HEK293T (cell line): ENCODE measurements at regions of chr11 and their contacts with region 1.

Region 1: DNA sequence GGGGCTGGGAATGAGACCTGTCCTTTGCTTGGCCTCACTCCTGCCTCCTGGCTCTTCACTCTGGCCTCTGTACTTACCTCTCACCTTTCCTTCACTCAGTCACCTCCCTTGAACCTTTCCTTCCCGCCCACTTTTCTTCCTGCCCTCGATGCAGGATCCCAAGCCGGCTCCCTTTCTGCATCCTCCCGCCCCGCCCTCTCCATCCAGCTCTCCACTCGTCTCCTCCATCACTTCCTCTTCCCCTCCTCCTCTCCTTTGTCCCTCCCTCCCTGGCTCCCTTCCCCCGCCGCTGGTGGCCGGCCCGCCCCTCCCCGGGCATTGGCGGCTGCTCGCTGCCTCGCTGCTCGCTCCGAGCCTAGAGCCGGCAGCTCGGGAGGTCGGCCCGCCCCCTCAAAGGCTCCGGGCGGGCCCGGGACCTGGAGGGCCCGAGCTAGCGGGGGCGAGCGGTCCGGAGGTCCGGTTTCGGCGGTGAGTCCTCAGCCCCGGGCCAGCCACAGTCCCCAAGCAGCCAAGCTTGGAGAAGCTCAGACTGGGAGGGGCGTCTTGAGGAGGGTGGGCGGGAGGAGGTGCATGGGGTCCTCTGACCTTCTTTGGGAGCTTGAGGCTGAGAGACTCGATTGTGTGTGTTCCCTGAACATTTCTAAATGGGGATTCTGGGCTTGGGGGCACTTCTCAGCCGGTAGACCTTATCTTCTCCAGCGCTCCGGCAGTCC is 13.8 kb downstream of the PHLDB1 start:
- DNase-seq: peak; percentile 74

Region 2: GRCh38 chr11:118607401-118608359 is 13.5 kb before region 1 on chr11 and contains the start of gene PHLDB1:
- CTCF ChIA-PET with region 1: interaction called, 6 read pairs
- POLR2A ChIA-PET with region 1: interaction called, 28 read pairs
- DNase-seq: peak; percentile 76

Region 3: GRCh38 chr11:118634431-118635236 is 13.4 kb after region 1 on chr11:
- CTCF ChIA-PET with region 1: interaction called, 4 read pairs
- POLR2A ChIA-PET with region 1: interaction called, 31 read pairs
- DNase-seq: peak; percentile 87

Region 4: DNA sequence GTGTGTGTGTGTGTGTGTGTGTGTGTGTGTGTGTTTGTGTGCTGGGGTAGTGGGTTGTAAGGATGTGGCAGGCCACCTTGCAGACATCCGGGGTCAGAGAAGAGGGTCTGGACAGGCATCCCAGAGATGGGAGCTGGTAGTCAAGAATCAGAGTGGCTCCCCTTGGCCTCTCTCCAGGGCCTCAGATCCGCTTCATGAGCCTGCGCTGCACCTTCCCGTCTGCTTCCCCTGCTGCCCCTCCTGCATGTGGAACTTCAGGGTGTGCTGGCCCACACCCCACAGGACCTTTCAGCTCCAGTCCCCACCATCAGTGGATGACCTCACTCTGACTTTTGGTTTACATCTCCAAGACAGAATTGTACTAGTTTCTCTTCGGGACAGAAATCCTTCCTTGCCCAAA is 27.1 kb after region 1 on chr11:
- CTCF ChIA-PET with region 1: no interaction called
- POLR2A ChIA-PET with region 1: no interaction called
- DNase-seq: no peak

Region 5: DNA sequence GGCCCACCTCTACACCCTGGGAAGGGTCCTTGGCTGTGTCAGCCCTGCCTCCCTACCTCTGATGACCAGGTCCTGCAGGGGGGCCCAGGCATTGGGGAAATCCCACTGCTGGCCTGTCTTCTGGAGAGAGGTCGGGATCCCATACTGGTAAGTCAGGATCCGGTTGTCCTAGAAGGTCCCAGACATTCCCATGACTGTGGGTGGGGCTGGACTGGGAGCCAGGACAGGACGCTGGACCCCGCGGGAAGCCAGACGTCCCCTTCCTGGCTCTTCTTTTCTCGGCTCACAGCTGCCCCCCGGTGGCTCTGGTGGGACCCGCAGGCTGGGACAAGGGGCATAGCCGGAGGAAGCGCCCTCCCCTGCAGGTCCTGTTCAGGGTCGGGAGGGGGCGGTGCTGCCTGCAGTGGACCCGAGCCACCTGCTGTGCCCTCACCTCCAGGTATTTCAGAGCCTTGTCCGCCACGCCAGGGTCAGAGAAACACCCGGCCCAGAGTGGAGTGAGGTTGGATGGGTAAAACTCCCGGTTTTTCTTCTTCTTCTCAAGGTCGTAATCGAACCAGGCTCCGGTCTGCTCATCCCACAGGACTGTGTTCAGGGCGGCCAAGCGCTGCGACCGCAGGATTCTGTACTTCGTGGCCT is 38.2 kb after region 1 on chr11:
- CTCF ChIA-PET with region 1: interaction called, 15 read pairs
- POLR2A ChIA-PET with region 1: interaction called, 4 read pairs
- DNase-seq: peak; percentile 97